ENCODE measurements at regions of chr10 and their contacts with region 1.

Region 1: DNA sequence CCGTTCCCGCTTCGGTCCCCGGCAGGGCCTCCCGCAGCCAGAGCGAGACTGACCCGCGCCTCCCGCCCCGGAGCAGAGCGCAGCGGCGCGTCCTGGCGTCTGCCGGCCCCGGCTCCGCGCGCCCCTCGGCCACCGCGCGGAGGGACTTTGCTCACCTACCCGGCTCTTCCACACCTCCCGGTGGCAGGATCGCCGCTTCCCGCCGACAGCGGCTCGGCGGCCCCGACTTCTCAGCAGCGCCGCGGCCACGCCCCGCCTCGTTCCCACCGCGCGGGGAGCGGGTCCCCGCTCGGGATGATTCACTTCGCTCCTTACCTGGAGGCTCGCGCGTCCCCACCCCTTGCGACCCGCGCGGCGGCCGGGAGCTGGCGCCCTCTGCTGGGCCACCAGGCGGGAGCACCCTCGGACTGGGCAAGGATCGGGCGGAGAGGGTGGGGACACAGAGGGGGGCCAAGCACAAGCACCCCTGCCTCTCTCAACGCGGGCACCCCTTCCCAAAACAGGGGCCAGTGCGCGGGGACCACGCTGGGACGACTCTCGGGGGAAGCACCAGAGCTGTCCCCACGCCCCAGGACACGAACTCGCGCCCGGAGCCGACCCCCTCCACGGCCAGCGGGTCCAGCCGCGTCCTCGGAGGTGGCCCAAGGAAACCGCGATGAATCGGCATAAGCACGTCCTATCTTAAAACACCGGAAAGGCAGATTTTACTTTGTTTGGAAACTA is 101.0 kb upstream of the SVIL start:
- DNase-seq: peak; percentile 50
- ATAC-seq: peak; percentile 89
- H3K4me3 ChIP-seq: peak overlapping the region; percentile 72 to 77
- H3K27ac ChIP-seq: peak overlapping the region; percentile 75
- H3K4me1 ChIP-seq: peaks cover 19% of the 10 kb centered on the region
- H3K27me3 ChIP-seq: no peaks in the 10 kb centered on the region
- CTCF ChIP-seq: peak; percentile 94

Region 2: DNA sequence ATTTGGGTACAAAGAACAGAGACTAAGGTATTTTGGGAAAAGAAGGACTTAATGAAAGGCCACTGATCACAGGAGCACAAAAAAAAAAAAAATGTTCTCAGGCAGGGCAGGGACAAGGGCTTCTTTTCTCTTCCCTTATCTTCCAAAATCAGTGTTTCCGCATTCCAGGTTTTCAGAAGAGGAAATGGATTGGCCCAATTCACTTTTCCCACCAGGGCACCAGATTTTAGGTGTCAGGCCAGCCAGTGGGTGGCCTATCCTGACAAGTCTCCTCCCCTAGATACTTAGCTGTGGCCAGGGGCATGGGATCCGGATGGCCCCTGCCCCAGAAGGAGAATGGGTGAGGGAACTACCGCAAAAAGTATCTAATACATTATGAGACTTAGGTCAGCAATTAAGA is 1291.7 kb before region 1 on chr10:
- CTCF ChIA-PET with region 1: no interaction called
- POLR2A ChIA-PET with region 1: no interaction called
- in situ Hi-C with region 1: no loop called
- intact Hi-C with region 1: no loop called
- DNase-seq: no peak
- ATAC-seq: no peak
- H3K4me3 ChIP-seq: no peak overlapping the region
- H3K27ac ChIP-seq: no peak overlapping the region
- H3K4me1 ChIP-seq: no peaks in the 10 kb centered on the region
- H3K27me3 ChIP-seq: peaks cover 2% of the 10 kb centered on the region; the same call in 1 of the 2 replicates
- CTCF ChIP-seq: no peak

Region 3: GRCh38 chr10:29026050-29026797 is 709.5 kb before region 1 on chr10:
- CTCF ChIA-PET with region 1: interaction called, 10 read pairs
- POLR2A ChIA-PET with region 1: no interaction called
- in situ Hi-C with region 1: no loop called
- intact Hi-C with region 1: no loop called
- DNase-seq: no peak
- ATAC-seq: no peak
- H3K4me3 ChIP-seq: no peak overlapping the region
- H3K27ac ChIP-seq: no peak overlapping the region
- H3K4me1 ChIP-seq: no peaks in the 10 kb centered on the region
- H3K27me3 ChIP-seq: no peaks in the 10 kb centered on the region
- CTCF ChIP-seq: no peak

Region 4: DNA sequence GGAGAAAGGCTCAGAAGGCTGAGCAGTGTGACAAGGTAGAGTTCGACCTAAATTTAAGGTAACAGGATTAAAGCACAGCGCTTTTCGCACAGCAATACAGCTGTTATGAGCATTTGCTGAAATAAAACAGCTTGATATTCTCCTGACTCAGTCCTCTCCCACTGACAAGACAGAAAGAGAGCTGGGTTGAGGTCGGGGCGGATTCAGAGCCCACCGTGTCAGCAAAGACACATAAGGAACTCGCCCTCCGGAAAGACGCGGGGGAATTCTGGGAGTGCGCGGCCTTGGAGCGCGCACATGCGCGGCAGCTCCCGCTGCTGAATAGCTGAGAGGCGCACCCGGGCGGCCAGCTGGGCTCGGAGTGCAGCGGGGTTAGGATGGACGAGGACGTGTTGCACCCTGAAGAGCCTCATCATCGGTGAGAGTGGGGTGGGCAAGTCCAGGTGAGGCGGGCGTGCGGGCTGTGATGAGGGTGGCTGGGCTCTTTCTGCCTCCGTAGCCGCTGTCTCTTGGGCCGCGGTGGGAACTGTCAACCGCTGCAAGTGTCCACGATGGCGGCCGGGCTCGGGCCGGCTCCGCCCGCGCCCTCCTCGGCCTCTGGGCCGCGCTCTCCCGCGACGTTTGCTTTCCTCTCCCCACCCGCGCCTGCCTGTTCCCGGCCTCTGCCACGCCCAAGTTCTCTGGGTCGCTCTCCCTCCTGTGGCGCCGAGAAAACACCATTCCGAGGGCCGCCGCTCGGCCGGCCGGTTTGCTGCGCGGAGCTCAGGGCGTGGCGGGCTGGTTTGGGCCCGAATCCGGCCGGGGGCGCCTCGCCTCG is 326.3 kb before region 1 on chr10:
- CTCF ChIA-PET with region 1: no interaction called
- POLR2A ChIA-PET with region 1: no interaction called
- in situ Hi-C with region 1: no loop called
- intact Hi-C with region 1: no loop called
- DNase-seq: peak; percentile 22
- ATAC-seq: peak; percentile 99
- H3K4me3 ChIP-seq: peak overlapping the region; percentile 65 to 74
- H3K27ac ChIP-seq: peak overlapping the region; percentile 91
- H3K4me1 ChIP-seq: peaks cover 4% of the 10 kb centered on the region
- H3K27me3 ChIP-seq: no peaks in the 10 kb centered on the region
- CTCF ChIP-seq: no peak

Region 5: DNA sequence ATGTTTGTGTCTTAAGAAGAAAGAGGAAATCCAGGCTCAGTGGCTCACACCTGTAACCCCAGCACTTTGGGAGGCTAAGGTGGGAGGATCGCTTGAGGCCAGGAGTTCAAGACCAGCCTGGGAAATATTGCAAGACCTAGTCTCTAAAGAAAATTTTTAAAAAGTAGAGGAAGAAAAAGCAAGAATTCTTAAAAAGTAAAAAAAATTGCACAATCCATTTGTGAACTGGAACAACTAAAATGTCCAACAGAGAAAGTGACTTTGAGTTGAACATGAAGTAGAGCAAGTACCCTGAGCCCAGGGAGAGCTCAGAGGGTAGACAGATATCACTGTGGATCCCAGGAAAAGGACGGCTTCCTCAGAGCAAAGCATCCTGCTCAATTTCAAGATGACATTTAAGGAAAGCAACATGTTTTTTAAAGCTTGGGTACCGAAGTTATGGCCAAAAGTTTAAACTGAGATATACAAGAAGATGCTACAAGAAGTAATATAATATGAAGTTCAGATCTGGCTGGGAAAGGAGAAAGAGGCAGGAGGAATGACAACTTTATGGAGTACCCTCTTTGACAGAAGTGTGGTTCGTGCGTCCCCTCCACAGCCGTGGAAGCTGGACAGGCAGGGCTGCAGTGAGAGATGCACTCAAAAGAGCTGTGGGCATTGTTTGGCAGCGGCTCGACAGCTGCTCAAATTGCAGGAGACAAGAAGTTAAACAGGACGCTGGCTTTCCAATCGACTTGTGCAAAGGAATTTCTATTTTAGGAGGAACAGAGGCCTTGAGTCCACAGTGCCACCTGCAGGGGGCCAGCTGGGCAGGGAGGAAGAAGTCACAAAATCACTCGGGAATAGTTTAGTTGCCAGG is 122.3 kb after region 1 on chr10:
- CTCF ChIA-PET with region 1: no interaction called
- POLR2A ChIA-PET with region 1: no interaction called
- in situ Hi-C with region 1: no loop called
- intact Hi-C with region 1: loop called (anchors 5 kb)
- DNase-seq: peak; percentile 39
- ATAC-seq: peak; percentile 90
- H3K4me3 ChIP-seq: no peak overlapping the region
- H3K27ac ChIP-seq: peak overlapping the region; percentile 63
- H3K4me1 ChIP-seq: peaks cover 3% of the 10 kb centered on the region; the same call in 1 of the 2 replicates
- H3K27me3 ChIP-seq: no peaks in the 10 kb centered on the region
- CTCF ChIP-seq: peak; percentile 85

Region 6: GRCh38 chr10:30002104-30002950 is 266.6 kb after region 1 on chr10:
- CTCF ChIA-PET with region 1: no interaction called
- POLR2A ChIA-PET with region 1: no interaction called
- in situ Hi-C with region 1: no loop called
- intact Hi-C with region 1: loop called (anchors 5 kb)
- DNase-seq: peak; percentile 58
- ATAC-seq: peak; percentile 93
- H3K4me3 ChIP-seq: no peak overlapping the region
- H3K27ac ChIP-seq: no peak overlapping the region
- H3K4me1 ChIP-seq: peaks cover 9% of the 10 kb centered on the region; the same call in 1 of the 2 replicates
- H3K27me3 ChIP-seq: no peaks in the 10 kb centered on the region
- CTCF ChIP-seq: peak; percentile 90